GM12878 (cell line): ENCODE measurements at regions of chr10 and their contacts with region 1.

Region 1: GRCh38 chr10:73159038-73159648 is 8.7 kb downstream of the ECD start:
- DNase-seq: peak; percentile 30
- ATAC-seq: peak; percentile 53; the same call in 2 of the 3 replicates
- H3K4me3 ChIP-seq: no peak overlapping the region
- H3K27ac ChIP-seq: no peak overlapping the region
- H3K4me1 ChIP-seq: no peaks in the 10 kb centered on the region
- H3K27me3 ChIP-seq: no peaks in the 10 kb centered on the region
- CTCF ChIP-seq: peak; percentile 62 to 81 (median 64)
- EP300 ChIP-seq: no peak
- POLR2A ChIP-seq: no peak
- RAD21 ChIP-seq: peak; percentile 73

Region 2: GRCh38 chr10:73060738-73061635 is 98.2 kb before region 1 on chr10:
- CTCF ChIA-PET with region 1: interaction called, 14 read pairs
- POLR2A ChIA-PET with region 1: interaction called, 4 read pairs
- RAD21 ChIA-PET with region 1: interaction called, 12 read pairs
- SMC1A ChIA-PET with region 1: interaction called, 15 read pairs
- in situ Hi-C with region 1: no loop called
- intact Hi-C with region 1: no loop called
- DNase-seq: no peak
- ATAC-seq: peak; percentile 87
- H3K4me3 ChIP-seq: no peak overlapping the region
- H3K27ac ChIP-seq: no peak overlapping the region
- H3K4me1 ChIP-seq: peaks cover 2% of the 10 kb centered on the region; the same call in 1 of the 2 replicates
- H3K27me3 ChIP-seq: no peaks in the 10 kb centered on the region
- CTCF ChIP-seq: peak; percentile 27 to 53 (median 49); a peak in 5 of 6 replicates
- EP300 ChIP-seq: no peak
- POLR2A ChIP-seq: no peak
- RAD21 ChIP-seq: no peak; the same call in 1 of the 2 replicates

Region 3: GRCh38 chr10:73076360-73077183 is 82.6 kb before region 1 on chr10:
- CTCF ChIA-PET with region 1: interaction called, 21 read pairs
- POLR2A ChIA-PET with region 1: interaction called, 3 read pairs
- RAD21 ChIA-PET with region 1: interaction called, 4 read pairs
- SMC1A ChIA-PET with region 1: interaction called, 8 read pairs
- in situ Hi-C with region 1: no loop called
- intact Hi-C with region 1: no loop called
- DNase-seq: no peak
- ATAC-seq: peak; percentile 61
- H3K4me3 ChIP-seq: 0 out of 2 replicates have a peak overlapping the region, but pooled peaks have one; percentile 9
- H3K27ac ChIP-seq: peak overlapping the region; percentile 60
- H3K4me1 ChIP-seq: peaks cover 9% of the 10 kb centered on the region; the same call in 1 of the 2 replicates
- H3K27me3 ChIP-seq: no peaks in the 10 kb centered on the region
- CTCF ChIP-seq: no peak
- EP300 ChIP-seq: no peak
- POLR2A ChIP-seq: no peak
- RAD21 ChIP-seq: no peak

Region 4: GRCh38 chr10:73110345-73110849 is 48.7 kb before region 1 on chr10 and contains the start of gene NUDT13:
- CTCF ChIA-PET with region 1: interaction called, 12 read pairs
- POLR2A ChIA-PET with region 1: interaction called, 3 read pairs
- RAD21 ChIA-PET with region 1: no interaction called
- SMC1A ChIA-PET with region 1: interaction called, 8 read pairs
- in situ Hi-C with region 1: no loop called
- intact Hi-C with region 1: no loop called
- DNase-seq: peak; percentile 83
- ATAC-seq: peak; percentile 95
- H3K4me3 ChIP-seq: peak within 1 kb of the TSS; percentile 79
- H3K27ac ChIP-seq: peak within 1 kb of the TSS; percentile 90
- H3K4me1 ChIP-seq: no peaks in the 10 kb centered on the region
- H3K27me3 ChIP-seq: no peaks in the 10 kb centered on the region
- CTCF ChIP-seq: no peak
- EP300 ChIP-seq: no peak
- POLR2A ChIP-seq: no peak
- RAD21 ChIP-seq: no peak
- polyA plus RNA-seq, gene NUDT13: 1.5 to 2.6 TPM

Region 5: GRCh38 chr10:73131301-73131700 is 27.8 kb before region 1 on chr10:
- CTCF ChIA-PET with region 1: interaction called, 11 read pairs
- POLR2A ChIA-PET with region 1: no interaction called
- RAD21 ChIA-PET with region 1: no interaction called
- SMC1A ChIA-PET with region 1: interaction called, 5 read pairs
- in situ Hi-C with region 1: no loop called
- intact Hi-C with region 1: no loop called
- DNase-seq: no peak
- ATAC-seq: no peak
- H3K4me3 ChIP-seq: no peak overlapping the region
- H3K27ac ChIP-seq: no peak overlapping the region
- H3K4me1 ChIP-seq: no peaks in the 10 kb centered on the region
- H3K27me3 ChIP-seq: no peaks in the 10 kb centered on the region
- CTCF ChIP-seq: no peak
- EP300 ChIP-seq: no peak
- POLR2A ChIP-seq: no peak
- RAD21 ChIP-seq: no peak

Region 6: GRCh38 chr10:73136627-73137026 is 22.5 kb before region 1 on chr10:
- CTCF ChIA-PET with region 1: interaction called, 11 read pairs
- POLR2A ChIA-PET with region 1: no interaction called
- RAD21 ChIA-PET with region 1: interaction called, 4 read pairs
- SMC1A ChIA-PET with region 1: interaction called, 5 read pairs
- in situ Hi-C with region 1: no loop called
- intact Hi-C with region 1: no loop called
- DNase-seq: no peak
- ATAC-seq: no peak
- H3K4me3 ChIP-seq: no peak overlapping the region
- H3K27ac ChIP-seq: no peak overlapping the region
- H3K4me1 ChIP-seq: peaks cover 4% of the 10 kb centered on the region; the same call in 1 of the 2 replicates
- H3K27me3 ChIP-seq: no peaks in the 10 kb centered on the region
- CTCF ChIP-seq: no peak
- EP300 ChIP-seq: no peak
- POLR2A ChIP-seq: no peak
- RAD21 ChIP-seq: no peak

Region 7: DNA sequence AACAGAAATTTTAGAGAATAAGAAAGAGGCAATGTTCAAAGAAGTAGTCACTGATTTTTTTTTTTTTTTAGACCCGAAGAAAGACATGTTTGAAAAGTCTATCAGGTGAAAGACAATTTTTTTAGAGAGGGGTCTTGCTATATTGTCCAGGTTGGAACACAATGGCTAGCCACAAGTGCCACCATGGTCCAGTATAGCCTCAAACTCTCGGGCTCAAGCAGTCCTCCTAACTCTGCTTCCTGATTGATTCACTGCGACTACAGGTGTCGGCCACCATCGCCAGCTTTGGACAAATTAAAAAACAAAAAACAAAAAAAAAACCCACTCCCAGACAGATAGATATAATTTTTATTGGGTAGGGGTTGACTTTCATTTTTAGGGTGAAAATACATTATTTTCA is 31.0 kb after region 1 on chr10:
- CTCF ChIA-PET with region 1: no interaction called
- POLR2A ChIA-PET with region 1: no interaction called
- RAD21 ChIA-PET with region 1: no interaction called
- SMC1A ChIA-PET with region 1: no interaction called
- in situ Hi-C with region 1: no loop called
- intact Hi-C with region 1: no loop called
- DNase-seq: no peak
- ATAC-seq: no peak
- H3K4me3 ChIP-seq: no peak overlapping the region
- H3K27ac ChIP-seq: no peak overlapping the region
- H3K4me1 ChIP-seq: no peaks in the 10 kb centered on the region
- H3K27me3 ChIP-seq: no peaks in the 10 kb centered on the region
- CTCF ChIP-seq: no peak
- EP300 ChIP-seq: no peak
- POLR2A ChIP-seq: no peak
- RAD21 ChIP-seq: no peak